Activated T-helper 2 cell treated with anti-CD3 and anti-CD28 coated beads, Interferon-gamma antibody, Interleukin-2, Interleukin-4, amounts not matched to agents 10 μg/mL and 5 μg/mL and 100 μg/mL, durations not matched to agents 14 hours and 24 hours and 36 hours (primary cell): ENCODE measurements at regions of chr10 and their contacts with region 1.

Region 1: GRCh38 chr10:30694518-30695228 is 65.1 kb upstream of the LYZL2 start:
- DNase-seq: no peak
- H3K4me3 Mint-ChIP-seq: peak overlapping the region; percentile 49
- H3K27ac Mint-ChIP-seq: peak overlapping the region; percentile 94
- H3K4me1 Mint-ChIP-seq: peaks cover 77% of the 10 kb centered on the region
- H3K27me3 Mint-ChIP-seq: no peaks in the 10 kb centered on the region

Region 2: DNA sequence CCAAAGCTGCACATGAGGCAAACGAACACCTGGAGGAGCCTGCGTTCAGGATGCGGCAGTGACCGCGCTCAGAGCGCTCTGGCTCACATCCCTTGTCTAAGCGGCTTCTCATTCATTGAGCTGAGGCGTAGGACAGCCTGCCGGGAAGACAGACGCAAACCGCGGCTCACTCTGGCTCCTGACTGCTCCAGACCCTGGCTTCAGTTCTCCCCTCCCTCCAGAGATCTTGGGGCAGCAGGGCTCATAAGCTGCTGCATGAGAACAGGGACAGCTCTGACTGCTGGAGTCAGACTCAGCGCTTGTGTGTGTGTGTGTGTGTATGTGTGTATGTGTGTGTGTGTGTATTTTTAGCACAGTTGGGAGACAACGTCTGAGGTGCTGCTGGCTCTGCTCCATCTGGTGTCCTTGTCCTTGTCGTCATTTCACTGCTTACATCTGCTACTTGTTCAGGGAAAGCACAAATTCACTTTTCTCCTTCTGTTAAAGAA is 49.3 kb before region 1 on chr10:
- intact Hi-C with region 1: loop called (anchors 2 kb)
- DNase-seq: no peak
- H3K4me3 Mint-ChIP-seq: peak overlapping the region; percentile 40
- H3K27ac Mint-ChIP-seq: peak overlapping the region; percentile 50
- H3K4me1 Mint-ChIP-seq: peaks cover 40% of the 10 kb centered on the region
- H3K27me3 Mint-ChIP-seq: peaks cover 24% of the 10 kb centered on the region

Region 3: DNA sequence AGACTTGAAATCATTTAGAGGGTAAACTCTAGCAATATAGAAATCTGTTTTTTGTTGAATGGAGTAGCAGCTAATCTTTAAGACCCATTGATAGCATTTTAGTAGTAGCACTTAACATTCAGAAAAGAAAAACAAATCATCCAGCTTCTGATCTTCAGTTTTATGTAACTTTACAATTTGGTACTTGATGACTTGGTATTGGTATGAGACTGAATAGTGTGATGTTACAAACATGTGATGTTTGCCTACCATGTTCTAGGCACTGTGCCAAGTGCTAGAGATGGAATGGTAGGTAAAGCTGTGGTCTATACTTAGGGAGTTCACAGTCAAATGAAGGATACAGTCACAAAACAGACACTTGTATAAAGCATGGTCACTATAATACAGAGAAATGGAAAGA is 645.7 kb after region 1 on chr10:
- intact Hi-C with region 1: loop called (anchors 2 kb)
- DNase-seq: no peak
- H3K4me3 Mint-ChIP-seq: no peak overlapping the region
- H3K27ac Mint-ChIP-seq: no peak overlapping the region
- H3K4me1 Mint-ChIP-seq: peaks cover 23% of the 10 kb centered on the region
- H3K27me3 Mint-ChIP-seq: no peaks in the 10 kb centered on the region